WTC11 (cell line): ENCODE measurements at regions of chr10 and their contacts with region 1.

Region 1: GRCh38 chr10:29119374-29119773 is 169.5 kb upstream of the LYZL1 start:
- DNase-seq: peak; percentile 91
- ATAC-seq: peak; percentile 94
- H3K4me3 Mint-ChIP-seq: no peak overlapping the region
- H3K27ac Mint-ChIP-seq: no peak overlapping the region
- H3K4me1 Mint-ChIP-seq: peaks cover 7% of the 10 kb centered on the region
- H3K27me3 Mint-ChIP-seq: peaks cover 3% of the 10 kb centered on the region; the same call in 1 of the 2 replicates
- CTCF ChIP-seq: peak; percentile 87

Region 2: GRCh38 chr10:29022473-29022872 is 96.9 kb before region 1 on chr10:
- CTCF ChIA-PET with region 1: interaction called, 11 read pairs
- POLR2A ChIA-PET with region 1: no interaction called
- DNase-seq: no peak
- ATAC-seq: no peak
- H3K4me3 Mint-ChIP-seq: no peak overlapping the region
- H3K27ac Mint-ChIP-seq: peak overlapping the region; percentile 42; the same call in 1 of the 2 replicates
- H3K4me1 Mint-ChIP-seq: peaks cover 19% of the 10 kb centered on the region
- H3K27me3 Mint-ChIP-seq: peaks cover 5% of the 10 kb centered on the region
- CTCF ChIP-seq: no peak

Region 3: GRCh38 chr10:29105531-29106215 is 13.7 kb before region 1 on chr10:
- CTCF ChIA-PET with region 1: interaction called, 16 read pairs
- POLR2A ChIA-PET with region 1: no interaction called
- DNase-seq: no peak
- ATAC-seq: no peak
- H3K4me3 Mint-ChIP-seq: no peak overlapping the region
- H3K27ac Mint-ChIP-seq: no peak overlapping the region
- H3K4me1 Mint-ChIP-seq: peaks cover 6% of the 10 kb centered on the region
- H3K27me3 Mint-ChIP-seq: no peaks in the 10 kb centered on the region
- CTCF ChIP-seq: no peak